Activated naive CD4-positive, alpha-beta T cell treated with anti-CD3 and anti-CD28 coated beads for 36 hours (primary cell): ENCODE measurements at regions of chr14 and their contacts with region 1.

Region 1: GRCh38 chr14:70934502-70935134 is 27.4 kb downstream of the PCNX1 start:
- DNase-seq: peak; percentile 37
- H3K4me3 Mint-ChIP-seq: peak overlapping the region; percentile 56
- H3K27ac Mint-ChIP-seq: peak overlapping the region; percentile 84
- H3K4me1 Mint-ChIP-seq: peaks cover 72% of the 10 kb centered on the region
- H3K27me3 Mint-ChIP-seq: no peaks in the 10 kb centered on the region

Region 2: DNA sequence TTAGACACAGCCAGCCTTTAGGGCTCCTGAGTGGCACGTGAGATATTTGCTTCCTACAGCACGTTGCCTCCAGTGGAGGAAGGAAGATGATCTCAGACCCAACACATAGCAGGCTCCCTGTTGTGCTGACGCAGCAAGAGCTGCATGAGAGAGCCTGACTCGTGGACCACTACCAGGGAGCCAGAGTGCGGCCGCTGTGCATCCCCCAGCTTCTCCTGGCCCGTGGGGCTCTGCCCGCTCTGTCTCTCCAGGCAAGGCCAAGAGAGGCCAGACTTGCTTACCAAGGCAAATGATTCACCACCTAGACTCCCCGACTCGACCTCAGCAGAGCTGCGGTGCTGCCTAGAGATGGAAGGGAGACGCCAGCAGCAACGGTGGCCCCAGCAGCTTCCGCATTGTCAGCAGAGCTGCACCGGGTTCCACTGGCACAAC is 162.8 kb before region 1 on chr14:
- CTCF ChIA-PET with region 1: no interaction called
- intact Hi-C with region 1: no loop called
- DNase-seq: no peak
- H3K4me3 Mint-ChIP-seq: no peak overlapping the region
- H3K27ac Mint-ChIP-seq: no peak overlapping the region
- H3K4me1 Mint-ChIP-seq: no peaks in the 10 kb centered on the region
- H3K27me3 Mint-ChIP-seq: no peaks in the 10 kb centered on the region

Region 3: DNA sequence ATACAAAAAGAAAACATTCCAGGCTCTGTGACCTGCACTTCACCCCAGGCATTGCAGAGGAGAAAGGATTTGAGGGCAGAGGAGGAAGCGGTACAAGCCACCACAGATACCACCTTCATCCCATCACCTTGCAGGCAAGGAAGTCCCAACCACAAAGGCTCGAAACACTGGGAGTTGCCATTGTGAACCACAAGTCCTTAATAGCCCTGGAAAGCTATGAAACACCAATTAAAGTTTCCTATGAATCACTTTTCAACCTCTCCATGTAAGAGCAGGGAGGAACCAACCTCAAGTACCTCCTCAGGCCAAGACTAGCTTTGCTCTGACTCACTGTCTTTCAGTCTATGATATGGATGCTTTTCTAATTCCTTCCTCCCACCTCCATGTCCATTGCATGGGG is 152.3 kb before region 1 on chr14:
- CTCF ChIA-PET with region 1: no interaction called
- intact Hi-C with region 1: no loop called
- DNase-seq: no peak
- H3K4me3 Mint-ChIP-seq: no peak overlapping the region
- H3K27ac Mint-ChIP-seq: no peak overlapping the region
- H3K4me1 Mint-ChIP-seq: peaks cover 16% of the 10 kb centered on the region
- H3K27me3 Mint-ChIP-seq: no peaks in the 10 kb centered on the region

Region 4: DNA sequence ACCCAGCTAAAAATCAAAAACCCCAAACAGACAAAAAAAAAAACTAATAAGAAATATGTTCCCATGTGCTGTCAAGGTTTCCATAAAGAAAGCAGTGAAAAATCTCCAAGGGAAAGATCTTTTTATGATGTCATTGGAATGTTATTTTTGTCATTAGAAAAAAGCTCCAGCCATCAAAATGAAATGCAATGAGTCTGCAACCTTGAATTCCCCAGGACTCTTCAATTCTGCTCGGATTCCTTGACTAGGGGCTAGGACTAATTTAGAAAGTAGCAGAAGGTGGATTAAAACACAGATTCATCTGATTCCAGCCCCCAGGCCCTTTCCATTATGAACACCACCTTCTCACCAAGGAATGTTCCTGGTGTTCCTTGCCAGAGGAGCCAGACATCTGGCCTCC is 33.3 kb before region 1 on chr14:
- CTCF ChIA-PET with region 1: interaction called, 15 read pairs
- intact Hi-C with region 1: loop called (anchors 1 kb)
- DNase-seq: no peak
- H3K4me3 Mint-ChIP-seq: no peak overlapping the region
- H3K27ac Mint-ChIP-seq: peak overlapping the region; percentile 52
- H3K4me1 Mint-ChIP-seq: peaks cover 52% of the 10 kb centered on the region
- H3K27me3 Mint-ChIP-seq: no peaks in the 10 kb centered on the region

Region 5: DNA sequence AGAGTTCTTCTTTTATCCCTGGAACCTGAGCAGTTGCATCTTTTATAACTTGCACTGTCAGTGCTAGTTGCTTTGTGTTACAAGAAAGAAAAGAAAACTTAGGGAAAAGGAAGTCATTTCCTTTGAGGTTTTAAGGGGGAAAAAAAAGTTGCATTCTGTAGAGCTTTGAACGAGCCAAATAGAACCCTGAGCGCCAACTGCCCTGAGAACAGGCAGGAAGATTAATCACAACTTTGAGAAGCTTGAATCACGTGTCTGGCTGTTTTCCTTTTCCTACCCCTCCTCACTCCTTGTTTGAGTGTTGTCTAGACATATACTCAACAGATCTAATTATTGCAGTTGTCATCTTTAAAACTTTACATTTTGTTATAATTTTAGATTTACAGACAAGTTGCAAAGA is 14.8 kb before region 1 on chr14:
- CTCF ChIA-PET with region 1: interaction called, 3 read pairs
- intact Hi-C with region 1: loop called (anchors 1 kb)
- DNase-seq: peak; percentile 48
- H3K4me3 Mint-ChIP-seq: peak overlapping the region; percentile 30
- H3K27ac Mint-ChIP-seq: peak overlapping the region; percentile 83
- H3K4me1 Mint-ChIP-seq: peaks cover 84% of the 10 kb centered on the region
- H3K27me3 Mint-ChIP-seq: no peaks in the 10 kb centered on the region

Region 6: DNA sequence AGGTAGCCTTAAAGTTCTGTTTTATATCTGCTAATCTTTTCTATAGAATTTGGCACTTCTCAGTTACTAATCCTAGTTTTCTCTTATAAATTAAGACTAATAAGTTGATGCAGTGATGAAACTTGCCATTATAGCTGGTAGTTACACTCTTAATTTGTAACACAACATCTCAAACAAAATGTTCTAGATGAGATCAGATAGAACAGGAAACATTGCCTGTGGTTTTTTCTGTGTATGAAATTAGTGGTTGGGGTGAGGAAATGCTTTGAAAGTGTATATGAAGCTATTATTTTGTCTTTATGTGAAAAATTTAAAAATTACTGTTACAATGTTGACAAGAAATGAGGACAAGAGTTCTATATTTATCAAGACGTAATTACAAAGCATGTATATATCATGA is 64.5 kb after region 1 on chr14:
- CTCF ChIA-PET with region 1: no interaction called
- intact Hi-C with region 1: loop called (anchors 2 kb)
- DNase-seq: no peak
- H3K4me3 Mint-ChIP-seq: no peak overlapping the region
- H3K27ac Mint-ChIP-seq: peak overlapping the region; percentile 85
- H3K4me1 Mint-ChIP-seq: peaks cover 73% of the 10 kb centered on the region
- H3K27me3 Mint-ChIP-seq: no peaks in the 10 kb centered on the region